ENCODE measurements at regions of chr1 and their contacts with region 1.

Region 1: GRCh38 chr1:27830621-27831424 is at the start of gene PPP1R8:
- DNase-seq: peak; percentile 57 to 92
- ATAC-seq: peak; percentile 100
- H3K4me3 ChIP-seq: peak within 1 kb of the TSS; percentile 98
- H3K27ac ChIP-seq: peak within 1 kb of the TSS; percentile 94 to 96
- H3K4me1 ChIP-seq: peaks cover 16% of the 10 kb centered on the region; the same call in 2 of the 3 replicates
- CTCF ChIP-seq: no peak
- EP300 ChIP-seq: no peak
- POLR2A ChIP-seq: peak; percentile 83
- RAD21 ChIP-seq: no peak
- polyA plus RNA-seq, gene PPP1R8: 42.0 and 43.9 TPM in 2 replicates

Region 2: GRCh38 chr1:27725374-27726173 is 105.2 kb before region 1 on chr1 and contains the start of gene FAM76A:
- CTCF ChIA-PET with region 1: interaction called, 4 read pairs
- POLR2A ChIA-PET with region 1: interaction called, 11 read pairs
- DNase-seq: peak; percentile 89 to 99
- ATAC-seq: peak; percentile 98 to 99
- H3K4me3 ChIP-seq: peak within 1 kb of the TSS; percentile 84
- H3K27ac ChIP-seq: peak within 1 kb of the TSS; percentile 81 to 94
- H3K4me1 ChIP-seq: peaks cover 9% of the 10 kb centered on the region; the same call in 2 of the 3 replicates
- CTCF ChIP-seq: peak; percentile 46
- EP300 ChIP-seq: no peak
- POLR2A ChIP-seq: peak; percentile 26
- RAD21 ChIP-seq: no peak; a peak in 1 of 5 replicates
- polyA plus RNA-seq, gene FAM76A: 6.5 and 7.0 TPM in 2 replicates

Region 3: DNA sequence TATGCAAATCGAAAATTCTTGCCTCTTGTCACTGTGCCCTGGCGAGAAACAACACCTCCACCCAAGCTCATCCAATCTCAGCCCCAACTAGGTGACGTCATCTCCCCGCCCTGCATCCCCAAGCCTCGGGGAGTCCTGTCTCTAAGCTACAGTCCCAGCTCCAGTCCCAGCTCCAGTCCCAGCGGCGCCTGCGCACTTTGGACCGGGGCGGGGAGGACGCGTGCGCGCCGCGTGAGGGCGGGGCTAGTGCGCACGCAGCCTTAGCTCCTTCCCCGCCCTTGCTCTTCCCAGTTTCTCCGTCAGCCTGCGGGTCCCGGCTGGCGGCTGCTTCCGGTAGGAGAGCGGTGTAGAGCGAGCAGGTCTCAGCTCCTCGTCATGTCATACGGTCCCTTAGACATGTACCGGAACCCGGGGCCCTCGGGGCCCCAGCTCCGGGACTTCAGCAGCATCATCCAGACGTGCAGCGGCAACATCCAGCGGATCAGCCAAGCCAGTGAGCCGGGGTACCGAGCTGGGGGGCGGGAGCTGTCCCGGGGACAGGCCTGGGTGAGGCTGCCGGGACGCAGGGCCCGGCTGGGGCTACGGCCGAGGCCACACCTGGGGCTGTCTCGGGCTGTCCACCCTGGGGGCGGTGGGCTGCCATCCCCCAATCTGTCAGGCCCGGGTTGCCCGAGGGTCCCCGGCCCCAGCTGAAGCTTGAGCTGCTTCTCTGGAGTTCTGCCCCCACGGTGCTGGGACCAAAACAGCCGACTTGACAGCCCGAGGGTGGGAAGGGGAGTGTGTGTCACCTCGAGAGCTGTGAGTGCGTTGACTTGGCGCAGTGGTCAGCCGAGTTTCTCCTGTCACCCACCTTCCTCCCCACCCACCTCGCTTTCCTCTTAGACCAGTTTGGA is 57.6 kb before region 1 on chr1 and contains the start of gene STX12:
- CTCF ChIA-PET with region 1: interaction called, 3 read pairs
- POLR2A ChIA-PET with region 1: interaction called, 22 read pairs
- DNase-seq: peak; percentile 95 to 97
- ATAC-seq: peak; percentile 98 to 99
- H3K4me3 ChIP-seq: peak within 1 kb of the TSS; percentile 84
- H3K27ac ChIP-seq: peak within 1 kb of the TSS; percentile 72 to 90
- H3K4me1 ChIP-seq: peaks cover 15% of the 10 kb centered on the region; the same call in 2 of the 3 replicates
- CTCF ChIP-seq: no peak
- EP300 ChIP-seq: no peak
- POLR2A ChIP-seq: peak; percentile 74
- RAD21 ChIP-seq: no peak
- polyA plus RNA-seq, gene STX12: 12.8 and 14.6 TPM in 2 replicates

Region 4: GRCh38 chr1:27816921-27817630 is 13.7 kb before region 1 on chr1:
- CTCF ChIA-PET with region 1: no interaction called
- POLR2A ChIA-PET with region 1: interaction called, 11 read pairs
- DNase-seq: peak in 1 of 2 experiments; percentile 76
- ATAC-seq: peak; percentile 77 to 86; a peak in 5 of 6 replicates
- H3K4me3 ChIP-seq: no peak overlapping the region
- H3K27ac ChIP-seq: peak overlapping the region; percentile 52 to 72; a peak in 4 of 6 replicates
- H3K4me1 ChIP-seq: peaks cover 17% of the 10 kb centered on the region
- CTCF ChIP-seq: no peak
- EP300 ChIP-seq: no peak
- POLR2A ChIP-seq: no peak
- RAD21 ChIP-seq: no peak

Region 5: GRCh38 chr1:27858072-27858958 is 27.5 kb after region 1 on chr1:
- CTCF ChIA-PET with region 1: interaction called, 11 read pairs
- POLR2A ChIA-PET with region 1: no interaction called
- DNase-seq: peak; percentile 60 to 69
- ATAC-seq: peak; percentile 89 to 94
- H3K4me3 ChIP-seq: no peak overlapping the region
- H3K27ac ChIP-seq: peak overlapping the region in 1 of 2 experiments; percentile 24; a peak in 1 of 6 replicates
- H3K4me1 ChIP-seq: 0 out of 3 replicates have a peak, but pooled peaks cover under 1% of the 10 kb centered on the region
- CTCF ChIP-seq: peak; percentile 80
- EP300 ChIP-seq: no peak
- POLR2A ChIP-seq: no peak
- RAD21 ChIP-seq: peak; percentile 89 to 92

Region 6: DNA sequence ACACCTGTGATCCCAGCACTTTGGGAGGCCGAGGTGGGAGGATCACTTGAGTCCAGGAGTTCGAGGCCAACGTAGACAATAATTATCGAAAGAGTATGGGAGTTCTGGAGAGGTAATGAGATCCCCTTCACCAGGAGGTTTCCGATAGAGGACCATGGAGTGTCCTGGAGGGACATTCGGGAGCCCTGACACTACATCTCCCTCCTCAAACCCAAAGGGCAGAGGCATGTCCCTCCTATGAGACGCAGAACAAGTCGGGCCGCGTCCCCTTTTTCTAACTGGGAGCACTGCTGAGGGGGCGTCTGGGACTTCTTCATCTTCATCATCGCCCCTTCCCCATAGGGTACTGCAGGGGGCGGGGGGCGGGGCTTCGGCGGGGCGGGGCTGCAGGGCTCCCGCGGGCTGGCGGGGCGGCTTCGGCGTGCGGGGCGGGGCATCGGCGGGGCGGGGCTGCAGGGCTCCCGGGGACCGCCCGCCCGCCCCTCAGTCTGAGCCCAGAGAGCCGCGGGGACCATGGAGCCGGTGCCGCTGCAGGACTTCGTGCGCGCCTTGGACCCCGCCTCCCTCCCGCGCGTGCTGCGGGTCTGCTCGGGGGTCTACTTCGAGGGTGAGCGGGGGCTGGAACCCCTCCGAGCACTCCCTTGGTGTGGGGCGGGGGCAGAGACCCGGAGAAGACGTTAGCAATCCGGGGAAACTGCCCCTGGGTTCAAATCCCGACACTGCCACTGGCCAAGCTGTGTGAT is 41.4 kb after region 1 on chr1 and contains the start of gene THEMIS2:
- CTCF ChIA-PET with region 1: no interaction called
- POLR2A ChIA-PET with region 1: no interaction called
- DNase-seq: peak in 1 of 2 experiments; percentile 32
- ATAC-seq: peak; percentile 81 to 91
- H3K4me3 ChIP-seq: peak within 1 kb of the TSS; percentile 63
- H3K27ac ChIP-seq: peak within 1 kb of the TSS; percentile 61 to 87; a peak in 5 of 6 replicates
- H3K4me1 ChIP-seq: peaks cover 11% of the 10 kb centered on the region; the same call in 1 of the 3 replicates
- CTCF ChIP-seq: no peak
- EP300 ChIP-seq: no peak
- POLR2A ChIP-seq: no peak
- RAD21 ChIP-seq: no peak
- polyA plus RNA-seq, gene THEMIS2: 0.81 and 0.95 TPM in 2 replicates

Measured in A549 (cell line).